MCF 10A (cell line): ENCODE measurements at regions of chr4 and their contacts with region 1.

Region 1: DNA sequence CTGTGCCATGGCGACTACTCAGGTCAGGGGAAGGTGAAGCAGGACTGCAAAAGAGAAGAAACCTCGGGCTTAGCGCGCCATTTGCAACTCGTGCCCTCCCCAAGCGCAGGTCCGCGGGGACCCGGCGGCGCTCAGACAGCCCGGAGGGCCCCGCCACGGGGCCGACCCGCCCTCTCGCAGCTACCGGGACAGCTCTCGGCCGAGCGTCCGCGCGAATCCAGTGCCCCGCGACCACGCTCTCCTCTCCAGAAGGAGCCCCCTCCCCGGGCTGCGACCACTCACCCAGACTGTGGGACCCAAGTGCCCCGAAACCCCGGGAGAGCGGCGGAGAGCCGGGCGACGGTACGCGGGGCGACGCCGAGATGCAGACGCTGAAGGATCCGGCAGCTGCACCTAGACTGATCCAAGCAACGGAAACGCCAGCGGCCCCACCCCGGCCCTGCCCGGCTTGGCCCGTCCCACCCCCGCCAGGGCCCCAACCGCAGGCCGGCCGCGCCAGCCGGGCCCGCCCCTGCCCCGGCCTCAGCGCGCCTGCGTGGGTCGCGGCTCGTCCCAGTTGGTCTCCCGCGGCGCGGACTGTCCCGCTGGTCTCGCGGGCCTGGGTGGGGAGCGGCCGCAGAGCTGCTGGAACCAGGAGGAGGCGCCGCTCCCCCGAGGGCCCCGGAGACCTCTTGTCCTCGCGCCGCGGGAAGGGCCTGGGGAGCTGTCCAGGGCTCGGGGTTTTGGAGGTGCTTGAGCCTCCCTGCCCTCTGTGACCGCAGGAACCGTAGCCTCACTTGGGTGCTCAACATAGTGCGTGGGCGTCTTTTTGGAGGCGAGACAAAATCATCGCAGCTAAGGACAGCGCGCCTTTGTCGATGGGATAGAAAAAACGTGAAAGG is at the start of gene ANXA5:
- DNase-seq: peak; percentile 84
- H3K4me3 Mint-ChIP-seq: peak within 1 kb of the TSS; percentile 96
- H3K27ac Mint-ChIP-seq: peak within 1 kb of the TSS; percentile 99
- H3K4me1 Mint-ChIP-seq: peaks cover 27% of the 10 kb centered on the region
- H3K27me3 Mint-ChIP-seq: no peaks in the 10 kb centered on the region
- CTCF ChIP-seq: peak; percentile 20
- total RNA-seq, gene ANXA5: 476 and 566 TPM in 2 replicates

Region 2: GRCh38 chr4:121711263-121712000 is 14.6 kb after region 1 on chr4:
- CTCF ChIA-PET with region 1: interaction called, 6 read pairs
- POLR2A ChIA-PET with region 1: interaction called, 63 read pairs
- intact Hi-C with region 1: no loop called
- DNase-seq: peak; percentile 93
- H3K4me3 Mint-ChIP-seq: peak overlapping the region; percentile 69
- H3K27ac Mint-ChIP-seq: peak overlapping the region; percentile 93
- H3K4me1 Mint-ChIP-seq: peaks cover 31% of the 10 kb centered on the region
- H3K27me3 Mint-ChIP-seq: no peaks in the 10 kb centered on the region
- CTCF ChIP-seq: no peak

Region 3: DNA sequence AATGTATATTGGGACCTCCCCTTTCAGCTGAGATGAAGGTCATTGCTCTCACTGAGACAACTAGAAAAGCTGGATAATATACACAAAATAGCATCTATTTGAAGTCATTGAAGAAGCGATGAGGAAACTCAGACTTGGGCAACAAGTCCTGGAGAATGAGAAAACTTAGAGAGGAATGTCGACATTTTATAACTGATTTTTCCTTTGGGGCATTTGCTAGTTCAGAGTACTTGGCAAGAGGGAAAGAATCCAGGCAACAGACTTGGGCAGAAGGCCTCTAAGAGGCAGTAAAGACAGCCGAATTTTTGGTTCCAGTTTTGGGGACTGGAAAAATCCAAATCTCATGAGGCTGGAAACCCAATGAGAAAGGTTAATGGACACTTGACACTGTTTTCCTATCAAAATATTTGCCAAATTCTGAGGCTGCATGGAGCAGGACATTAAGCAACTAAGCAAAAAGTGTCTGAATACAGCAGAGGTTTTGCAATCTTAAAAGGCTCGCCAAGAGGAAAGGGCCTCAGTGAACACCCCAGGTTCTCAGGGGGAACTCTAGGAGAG is 20.9 kb after region 1 on chr4:
- CTCF ChIA-PET with region 1: interaction called, 4 read pairs
- POLR2A ChIA-PET with region 1: interaction called, 63 read pairs
- intact Hi-C with region 1: no loop called
- DNase-seq: peak; percentile 72
- H3K4me3 Mint-ChIP-seq: no peak overlapping the region
- H3K27ac Mint-ChIP-seq: peak overlapping the region; percentile 2
- H3K4me1 Mint-ChIP-seq: peaks cover 11% of the 10 kb centered on the region
- H3K27me3 Mint-ChIP-seq: no peaks in the 10 kb centered on the region
- CTCF ChIP-seq: no peak

Region 4: DNA sequence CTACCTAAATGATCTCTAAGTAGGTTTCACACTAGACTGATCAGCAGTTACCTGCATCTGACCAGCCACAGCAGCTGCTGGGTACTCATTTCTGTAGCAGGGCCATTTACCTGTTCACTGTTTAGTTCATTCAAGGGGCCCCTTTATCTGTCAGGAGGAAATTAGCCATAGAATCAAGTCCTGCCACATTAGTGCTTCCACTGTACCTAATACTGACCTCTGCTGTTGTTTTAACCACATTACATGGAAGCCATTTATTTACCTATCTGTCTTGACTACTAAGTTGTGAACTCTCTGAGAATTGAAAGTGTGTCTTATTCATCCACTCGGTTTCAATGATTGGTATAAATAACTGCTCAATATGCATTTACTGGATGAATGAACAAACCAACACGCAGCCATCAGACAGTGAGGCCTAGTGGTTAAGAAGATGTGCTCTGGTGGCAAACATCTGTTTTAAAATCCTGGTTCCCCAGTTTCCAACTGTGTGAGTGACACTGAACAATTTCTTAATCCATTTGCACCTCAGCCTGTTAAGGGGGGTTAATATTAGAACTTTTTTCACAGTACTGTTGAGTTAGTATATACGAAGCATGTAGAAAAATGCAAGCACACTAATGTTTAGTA is 29.9 kb after region 1 on chr4:
- CTCF ChIA-PET with region 1: interaction called, 5 read pairs
- POLR2A ChIA-PET with region 1: interaction called, 12 read pairs
- intact Hi-C with region 1: loop called (anchors 1 kb)
- DNase-seq: peak; percentile 74
- H3K4me3 Mint-ChIP-seq: no peak overlapping the region
- H3K27ac Mint-ChIP-seq: peak overlapping the region; percentile 67
- H3K4me1 Mint-ChIP-seq: peaks cover 7% of the 10 kb centered on the region
- H3K27me3 Mint-ChIP-seq: no peaks in the 10 kb centered on the region
- CTCF ChIP-seq: peak; percentile 64

Region 5: DNA sequence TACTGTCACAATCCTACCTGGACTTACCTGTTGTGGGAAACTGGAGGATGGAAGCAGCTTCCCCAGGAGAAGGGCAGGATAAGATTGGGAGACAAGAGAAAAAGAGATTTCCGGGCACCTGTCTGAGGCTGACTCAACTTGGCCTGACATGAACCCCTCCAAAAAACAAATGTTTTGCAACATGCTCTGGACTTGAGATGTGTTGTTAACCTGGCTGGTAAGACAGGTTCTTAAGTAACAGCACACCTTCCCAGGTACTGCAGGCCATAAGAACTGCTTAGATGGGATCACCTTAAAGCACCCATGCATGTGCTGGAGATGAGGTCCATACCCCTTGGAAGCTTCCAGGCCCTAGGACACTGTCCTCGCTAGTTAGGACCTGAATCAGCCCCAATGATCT is 72.5 kb after region 1 on chr4:
- CTCF ChIA-PET with region 1: no interaction called
- POLR2A ChIA-PET with region 1: no interaction called
- intact Hi-C with region 1: no loop called
- DNase-seq: no peak
- H3K4me3 Mint-ChIP-seq: no peak overlapping the region
- H3K27ac Mint-ChIP-seq: no peak overlapping the region
- H3K4me1 Mint-ChIP-seq: peaks cover 6% of the 10 kb centered on the region
- H3K27me3 Mint-ChIP-seq: no peaks in the 10 kb centered on the region
- CTCF ChIP-seq: no peak

Region 6: GRCh38 chr4:121800961-121801714 is 104.3 kb after region 1 on chr4 and contains the start of gene EXOSC9:
- CTCF ChIA-PET with region 1: no interaction called
- POLR2A ChIA-PET with region 1: interaction called, 11 read pairs
- intact Hi-C with region 1: loop called (anchors 5 kb)
- DNase-seq: peak; percentile 93
- H3K4me3 Mint-ChIP-seq: peak within 1 kb of the TSS; percentile 86
- H3K27ac Mint-ChIP-seq: peak within 1 kb of the TSS; percentile 90
- H3K4me1 Mint-ChIP-seq: peaks cover 17% of the 10 kb centered on the region
- H3K27me3 Mint-ChIP-seq: no peaks in the 10 kb centered on the region
- CTCF ChIP-seq: no peak
- total RNA-seq, gene EXOSC9: 29.2 and 30.9 TPM in 2 replicates

Region 7: DNA sequence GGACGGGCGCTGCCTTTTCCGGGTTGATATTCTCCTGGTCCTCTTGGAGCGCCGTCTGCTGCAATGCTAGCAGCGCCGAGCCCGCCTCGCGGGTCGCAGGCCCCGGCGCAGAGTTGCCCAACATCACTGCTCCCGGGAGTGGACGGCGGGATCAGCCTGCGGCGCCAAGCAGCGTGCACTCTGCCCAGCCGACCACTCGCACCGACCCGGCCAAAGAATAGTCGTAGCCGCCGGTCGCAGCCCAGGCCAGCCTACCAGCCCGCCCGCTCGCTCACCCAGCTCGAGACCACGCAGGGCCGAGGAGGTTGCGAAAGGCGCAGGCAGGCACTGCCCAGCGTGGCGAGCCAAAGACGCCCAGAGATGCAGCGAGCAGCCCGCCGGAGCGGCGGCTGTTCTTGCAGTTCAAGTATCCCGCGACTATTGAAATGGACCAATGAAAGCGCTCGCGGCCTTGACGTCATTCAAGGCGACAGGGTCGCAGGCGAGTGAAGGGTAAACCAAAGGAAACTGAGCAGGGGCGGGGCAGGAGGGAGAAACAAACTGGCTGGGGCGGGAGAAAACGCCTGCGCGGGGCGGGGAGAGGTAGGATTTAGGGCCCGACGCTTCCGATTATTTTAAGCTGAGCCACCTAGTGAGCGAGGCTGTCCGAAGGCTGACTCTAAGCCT is 126.8 kb after region 1 on chr4 and contains the start of gene CCNA2:
- CTCF ChIA-PET with region 1: no interaction called
- POLR2A ChIA-PET with region 1: interaction called, 9 read pairs
- intact Hi-C with region 1: loop called (anchors 2 kb)
- DNase-seq: peak; percentile 99
- H3K4me3 Mint-ChIP-seq: peak within 1 kb of the TSS; percentile 82
- H3K27ac Mint-ChIP-seq: peak within 1 kb of the TSS; percentile 91
- H3K4me1 Mint-ChIP-seq: peaks cover 9% of the 10 kb centered on the region
- H3K27me3 Mint-ChIP-seq: no peaks in the 10 kb centered on the region
- CTCF ChIP-seq: no peak
- total RNA-seq, gene CCNA2: 12.1 and 22.0 TPM in 2 replicates